ENCODE measurements at regions of chr9 and their contacts with region 1.

Region 1: DNA sequence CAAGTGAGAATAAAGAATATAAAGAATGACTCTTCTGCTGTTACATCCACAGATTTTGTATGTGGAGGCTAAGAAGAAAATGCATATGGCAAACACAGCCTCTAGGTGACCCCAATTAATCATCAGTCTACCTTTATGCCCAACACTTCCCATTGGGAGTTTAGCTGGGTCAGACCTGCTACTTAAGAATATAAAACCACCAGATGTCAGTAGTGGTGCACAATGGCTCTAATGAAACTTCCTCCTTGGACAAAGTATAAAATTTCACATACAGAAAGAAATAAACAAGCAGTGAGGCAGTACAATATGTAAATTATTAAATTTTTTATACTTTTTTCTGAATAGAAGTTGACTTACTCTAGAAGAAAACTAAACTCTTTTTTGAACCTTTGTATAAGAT is 539.9 kb downstream of the BRINP1 start:
- DNase-seq: no peak
- H3K4me3 ChIP-seq: no peak overlapping the region
- H3K27ac ChIP-seq: no peak overlapping the region
- H3K4me1 ChIP-seq: no peaks in the 10 kb centered on the region
- H3K27me3 ChIP-seq: no peaks in the 10 kb centered on the region
- CTCF ChIP-seq: peak in 5 of 6 experiments; percentile 25 to 68 (median 55)
- POLR2A ChIP-seq: no peak

Region 2: DNA sequence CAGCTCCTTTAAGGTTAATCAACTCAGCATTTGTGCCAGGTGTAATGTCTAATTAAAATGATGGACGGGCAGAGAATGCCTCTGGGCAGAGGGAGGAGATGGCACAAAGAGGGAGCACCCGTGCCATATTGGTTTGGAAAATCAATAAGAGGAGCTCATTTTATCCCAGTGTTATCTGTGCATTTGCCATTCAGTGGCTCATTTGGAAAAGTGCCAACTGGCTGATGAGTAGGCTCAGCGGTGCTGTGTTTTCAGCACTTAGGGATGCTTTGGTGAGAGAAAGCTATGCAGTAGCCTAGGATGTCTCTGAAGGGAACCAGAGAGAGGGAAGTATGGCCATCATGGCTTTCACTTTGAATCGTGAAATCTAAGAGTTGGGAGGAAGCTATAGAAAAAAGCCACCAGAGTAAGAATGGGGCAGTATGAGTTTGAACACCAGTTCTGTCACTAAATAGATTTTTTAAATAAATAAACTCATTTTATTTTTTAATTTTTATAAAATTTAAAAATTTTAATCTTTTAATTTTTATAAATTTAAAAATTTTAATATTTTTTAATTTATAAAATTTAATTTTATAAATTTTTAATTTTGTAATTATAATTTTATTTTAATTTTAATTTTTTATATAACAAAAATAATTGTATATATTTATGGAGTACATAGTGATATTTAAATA is 67.1 kb after region 1 on chr9:
- intact Hi-C with region 1: no loop called
- DNase-seq: no peak
- H3K4me3 ChIP-seq: no peak overlapping the region
- H3K27ac ChIP-seq: no peak overlapping the region
- H3K4me1 ChIP-seq: no peaks in the 10 kb centered on the region
- H3K27me3 ChIP-seq: no peaks in the 10 kb centered on the region
- CTCF ChIP-seq: no peak
- POLR2A ChIP-seq: no peak

Region 3: GRCh38 chr9:119289740-119290433 is 460.6 kb after region 1 on chr9:
- intact Hi-C with region 1: loop called (anchors 5 kb)
- DNase-seq: peak; percentile 68 to 74
- H3K4me3 ChIP-seq: no peak overlapping the region
- H3K27ac ChIP-seq: no peak overlapping the region
- H3K4me1 ChIP-seq: no peaks in the 10 kb centered on the region
- H3K27me3 ChIP-seq: no peaks in the 10 kb centered on the region
- CTCF ChIP-seq: peak; percentile 71 to 96 (median 86)
- POLR2A ChIP-seq: no peak